Mammary epithelial cell (primary cell): ENCODE measurements at regions of chr2 and their contacts with region 1.

Region 1: GRCh38 chr2:230697676-230698075 is 15.0 kb upstream of the CAB39 start:
- DNase-seq: peak; percentile 20
- H3K4me3 ChIP-seq: no peak overlapping the region
- H3K27ac ChIP-seq: no peak overlapping the region
- H3K4me1 ChIP-seq: peaks cover 36% of the 10 kb centered on the region
- H3K27me3 ChIP-seq: no peaks in the 10 kb centered on the region
- CTCF ChIP-seq: no peak

Region 2: GRCh38 chr2:230589497-230590015 is 108.1 kb before region 1 on chr2:
- CTCF ChIA-PET with region 1: no interaction called
- dilution Hi-C with region 1: no loop called
- in situ Hi-C with region 1: no loop called
- intact Hi-C with region 1: no loop called
- DNase-seq: no peak
- H3K4me3 ChIP-seq: no peak overlapping the region
- H3K27ac ChIP-seq: no peak overlapping the region
- H3K4me1 ChIP-seq: no peaks in the 10 kb centered on the region
- H3K27me3 ChIP-seq: no peaks in the 10 kb centered on the region
- CTCF ChIP-seq: no peak

Region 3: DNA sequence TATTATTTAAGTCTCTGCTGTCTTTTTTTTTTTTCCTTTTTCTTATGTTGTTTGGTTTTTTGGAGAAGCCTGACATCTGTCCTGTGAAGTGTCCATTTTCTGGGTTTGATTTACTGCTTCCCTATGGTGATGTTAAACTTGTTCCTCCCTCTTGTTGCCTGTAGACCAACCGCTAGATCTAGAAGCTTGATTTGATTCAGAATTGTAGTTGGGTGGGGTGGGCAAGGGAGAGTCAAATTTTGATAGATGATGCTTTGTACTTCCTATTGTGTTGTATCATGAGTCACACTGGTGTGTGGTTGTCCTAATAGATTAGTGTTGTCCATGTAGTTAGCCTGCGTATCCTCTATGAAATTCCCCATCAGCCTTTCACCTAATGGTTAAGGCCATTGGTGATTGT is 50.4 kb after region 1 on chr2:
- CTCF ChIA-PET with region 1: no interaction called
- dilution Hi-C with region 1: loop called (anchors 5 kb)
- in situ Hi-C with region 1: no loop called
- intact Hi-C with region 1: no loop called
- DNase-seq: peak; percentile 44
- H3K4me3 ChIP-seq: no peak overlapping the region
- H3K27ac ChIP-seq: peak overlapping the region; percentile 25
- H3K4me1 ChIP-seq: peaks cover 19% of the 10 kb centered on the region
- H3K27me3 ChIP-seq: no peaks in the 10 kb centered on the region
- CTCF ChIP-seq: no peak